HEK293T (cell line): ENCODE measurements at regions of chr9 and their contacts with region 1.

Region 1: DNA sequence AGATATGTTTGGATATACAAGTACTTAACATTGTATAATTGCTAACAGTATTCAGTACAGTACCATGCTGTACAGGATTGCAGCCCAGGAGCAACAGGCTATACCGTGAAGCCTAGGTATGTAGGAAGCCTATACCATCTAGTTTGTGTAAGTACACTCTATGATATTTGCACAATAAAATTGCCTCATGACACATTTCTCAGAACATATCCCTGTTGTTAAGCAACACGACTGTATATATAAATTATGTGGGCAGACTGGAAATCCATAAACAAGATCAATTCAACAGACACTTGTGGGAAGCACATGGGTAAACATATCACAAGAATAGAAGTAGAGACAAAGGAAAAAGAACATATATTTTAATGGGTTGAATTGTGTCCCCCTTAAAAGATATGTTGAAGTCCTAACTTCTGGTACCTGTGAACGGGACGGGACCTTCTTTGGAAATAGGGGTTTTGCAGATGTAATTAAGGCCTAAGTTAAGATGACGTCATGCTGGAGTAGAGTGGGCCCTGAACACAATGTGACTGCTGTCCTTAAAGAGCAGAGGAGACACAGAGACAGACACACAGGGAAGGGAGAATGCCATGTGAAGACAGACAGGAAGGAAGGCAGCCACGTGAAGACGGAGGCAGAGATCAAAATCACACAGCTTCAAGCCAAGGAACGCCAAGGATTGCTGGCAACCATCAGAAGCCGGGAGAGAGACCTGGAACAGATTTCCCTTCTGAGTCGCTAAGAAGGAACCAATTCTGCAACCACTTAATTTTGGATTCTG is 76.3 kb downstream of the SCAI start:
- DNase-seq: no peak

Region 2: GRCh38 chr9:125126019-125126746 is 59.2 kb after region 1 on chr9:
- CTCF ChIA-PET with region 1: no interaction called
- POLR2A ChIA-PET with region 1: no interaction called
- DNase-seq: no peak

Region 3: DNA sequence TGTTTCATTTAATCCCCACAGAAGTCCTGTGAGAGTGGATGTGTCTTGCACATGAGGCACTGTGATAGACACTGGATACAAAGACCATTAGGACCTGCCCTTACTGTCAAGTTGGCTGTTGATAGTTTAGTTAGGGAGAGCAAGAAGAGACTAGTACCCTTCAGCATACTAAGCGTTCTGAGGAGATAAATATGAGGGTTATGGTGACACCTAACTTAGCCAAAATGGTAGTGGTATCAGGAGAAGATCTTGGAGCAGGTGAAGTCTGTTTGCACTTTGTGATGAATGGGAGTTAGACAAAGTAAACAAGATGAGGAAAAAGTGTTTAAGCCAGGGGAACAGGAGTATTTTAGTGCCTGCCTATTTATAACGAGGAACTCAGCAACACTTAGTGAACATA is 241.7 kb after region 1 on chr9:
- CTCF ChIA-PET with region 1: interaction called, 11 read pairs
- POLR2A ChIA-PET with region 1: no interaction called
- DNase-seq: no peak